GM12878 (cell line): ENCODE measurements at regions of chr1 and their contacts with region 1.

Region 1: GRCh38 chr1:50735443-50735842 is 224.6 kb downstream of the FAF1 start:
- DNase-seq: no peak
- ATAC-seq: no peak; the same call in 2 of the 3 replicates
- H3K4me3 ChIP-seq: no peak overlapping the region
- H3K27ac ChIP-seq: no peak overlapping the region
- H3K4me1 ChIP-seq: no peaks in the 10 kb centered on the region
- H3K27me3 ChIP-seq: no peaks in the 10 kb centered on the region
- CTCF ChIP-seq: peak in 2 of 3 experiments; percentile 28 to 38; a peak in 2 of 6 replicates
- EP300 ChIP-seq: no peak
- POLR2A ChIP-seq: no peak
- RAD21 ChIP-seq: 0 out of 2 replicates have a peak, but pooled peaks have one; percentile 32

Region 2: DNA sequence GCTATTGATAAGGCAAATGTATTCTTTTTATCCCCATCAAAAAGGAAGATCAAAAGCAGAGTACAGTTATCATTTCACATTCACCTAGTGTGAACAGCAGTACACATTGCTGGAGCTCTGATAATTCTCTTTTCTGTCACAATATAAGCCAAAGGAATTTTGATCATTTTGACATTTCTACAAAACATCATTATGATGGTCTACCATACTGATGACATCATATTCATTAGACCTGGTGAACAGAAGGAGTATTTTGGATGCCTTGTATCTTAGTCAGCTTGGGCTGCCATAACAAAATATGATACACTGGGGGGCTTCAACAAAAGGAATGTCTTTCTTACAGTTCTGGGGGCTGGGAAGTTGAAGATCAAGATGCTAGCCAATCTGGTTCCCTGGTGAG is 349.0 kb before region 1 on chr1:
- CTCF ChIA-PET with region 1: no interaction called
- POLR2A ChIA-PET with region 1: no interaction called
- RAD21 ChIA-PET with region 1: no interaction called
- SMC1A ChIA-PET with region 1: no interaction called
- in situ Hi-C with region 1: no loop called
- intact Hi-C with region 1: no loop called
- DNase-seq: no peak
- ATAC-seq: no peak
- H3K4me3 ChIP-seq: no peak overlapping the region
- H3K27ac ChIP-seq: no peak overlapping the region
- H3K4me1 ChIP-seq: no peaks in the 10 kb centered on the region
- H3K27me3 ChIP-seq: no peaks in the 10 kb centered on the region
- CTCF ChIP-seq: no peak
- EP300 ChIP-seq: no peak
- POLR2A ChIP-seq: no peak
- RAD21 ChIP-seq: no peak

Region 3: DNA sequence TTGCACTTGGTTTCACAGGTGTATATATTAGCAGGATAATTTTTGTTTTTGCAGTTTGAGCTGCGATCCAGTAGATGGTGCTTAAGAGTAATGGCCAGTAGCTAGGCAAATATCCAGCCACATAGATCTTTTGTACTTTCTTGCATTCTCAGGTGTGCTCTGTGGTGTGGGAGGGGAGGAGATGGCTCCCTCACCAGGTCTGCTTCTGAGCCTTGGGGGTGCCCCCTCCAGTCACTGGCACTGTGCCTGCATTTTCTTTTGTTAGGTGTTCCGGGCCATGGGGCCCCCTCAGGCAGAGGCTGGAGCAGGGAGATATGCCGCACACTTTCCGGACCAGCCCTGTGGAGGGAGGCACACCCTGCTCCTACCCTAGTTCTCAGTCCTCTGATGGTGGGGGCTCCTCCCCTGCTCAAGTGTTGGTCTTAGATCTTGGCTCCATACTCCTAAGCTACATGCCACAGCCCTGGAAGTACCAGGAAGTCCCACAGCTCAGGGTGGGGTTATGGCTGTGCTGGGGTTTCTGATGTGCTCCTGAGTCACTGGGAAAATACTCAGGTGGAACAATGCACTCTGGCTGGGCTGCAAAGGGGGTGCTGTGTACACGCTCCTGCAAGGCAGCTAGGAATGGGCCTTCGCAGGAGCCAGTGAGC is 114.6 kb before region 1 on chr1:
- CTCF ChIA-PET with region 1: interaction called, 13 read pairs
- POLR2A ChIA-PET with region 1: no interaction called
- RAD21 ChIA-PET with region 1: interaction called, 3 read pairs
- SMC1A ChIA-PET with region 1: interaction called, 3 read pairs
- in situ Hi-C with region 1: no loop called
- intact Hi-C with region 1: no loop called
- DNase-seq: no peak
- ATAC-seq: peak; percentile 46; the same call in 2 of the 3 replicates
- H3K4me3 ChIP-seq: no peak overlapping the region
- H3K27ac ChIP-seq: no peak overlapping the region
- H3K4me1 ChIP-seq: no peaks in the 10 kb centered on the region
- H3K27me3 ChIP-seq: no peaks in the 10 kb centered on the region
- CTCF ChIP-seq: peak; percentile 16 to 22 (median 19); a peak in 2 of 6 replicates
- EP300 ChIP-seq: no peak
- POLR2A ChIP-seq: no peak
- RAD21 ChIP-seq: 0 out of 2 replicates have a peak, but pooled peaks have one; percentile 2

Region 4: DNA sequence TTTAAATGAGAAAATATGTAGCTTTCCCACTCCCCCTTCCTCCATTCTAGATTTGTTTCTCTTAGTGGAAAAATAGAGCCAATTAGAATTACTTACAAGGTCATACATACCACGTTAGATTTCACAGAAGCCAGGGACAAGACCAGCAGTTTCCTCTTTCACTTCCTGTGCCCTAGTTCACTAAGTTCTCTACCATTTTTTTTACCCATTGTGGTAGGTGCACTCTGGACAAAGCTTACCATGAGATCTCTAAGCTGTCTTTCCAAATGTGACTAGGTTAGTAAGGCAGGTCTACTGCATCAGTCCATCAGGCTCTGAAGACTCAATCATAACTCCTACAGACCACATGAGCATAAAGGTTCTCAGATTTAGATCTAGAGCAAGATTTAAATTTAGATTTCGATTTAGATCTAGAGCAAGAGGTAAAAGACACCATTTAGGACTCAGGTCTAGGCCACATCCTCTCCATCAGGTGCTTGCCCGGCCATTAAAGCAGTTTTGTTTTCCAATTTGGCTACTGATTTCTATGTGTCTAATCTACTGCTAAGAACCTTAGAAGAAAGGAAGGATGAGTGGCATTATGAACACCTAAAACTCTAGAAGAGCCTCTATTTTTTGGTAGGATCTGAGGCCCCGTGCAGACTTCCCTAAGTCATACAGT is 10.7 kb before region 1 on chr1:
- CTCF ChIA-PET with region 1: interaction called, 10 read pairs
- POLR2A ChIA-PET with region 1: no interaction called
- RAD21 ChIA-PET with region 1: no interaction called
- SMC1A ChIA-PET with region 1: interaction called, 3 read pairs
- in situ Hi-C with region 1: no loop called
- intact Hi-C with region 1: no loop called
- DNase-seq: peak; percentile 62
- ATAC-seq: peak; percentile 93
- H3K4me3 ChIP-seq: no peak overlapping the region
- H3K27ac ChIP-seq: peak overlapping the region; percentile 48
- H3K4me1 ChIP-seq: peaks cover 20% of the 10 kb centered on the region
- H3K27me3 ChIP-seq: no peaks in the 10 kb centered on the region
- CTCF ChIP-seq: no peak
- EP300 ChIP-seq: no peak
- POLR2A ChIP-seq: no peak
- RAD21 ChIP-seq: no peak

Region 5: GRCh38 chr1:50917138-50918137 is 182.0 kb after region 1 on chr1:
- CTCF ChIA-PET with region 1: no interaction called
- POLR2A ChIA-PET with region 1: no interaction called
- RAD21 ChIA-PET with region 1: no interaction called
- SMC1A ChIA-PET with region 1: no interaction called
- in situ Hi-C with region 1: no loop called
- intact Hi-C with region 1: no loop called
- DNase-seq: peak; percentile 15
- ATAC-seq: peak; percentile 52
- H3K4me3 ChIP-seq: peak overlapping the region; percentile 3; the same call in 1 of the 2 replicates
- H3K27ac ChIP-seq: peak overlapping the region; percentile 49
- H3K4me1 ChIP-seq: peaks cover 3% of the 10 kb centered on the region
- H3K27me3 ChIP-seq: no peaks in the 10 kb centered on the region
- CTCF ChIP-seq: no peak
- EP300 ChIP-seq: no peak
- POLR2A ChIP-seq: no peak
- RAD21 ChIP-seq: no peak

Region 6: DNA sequence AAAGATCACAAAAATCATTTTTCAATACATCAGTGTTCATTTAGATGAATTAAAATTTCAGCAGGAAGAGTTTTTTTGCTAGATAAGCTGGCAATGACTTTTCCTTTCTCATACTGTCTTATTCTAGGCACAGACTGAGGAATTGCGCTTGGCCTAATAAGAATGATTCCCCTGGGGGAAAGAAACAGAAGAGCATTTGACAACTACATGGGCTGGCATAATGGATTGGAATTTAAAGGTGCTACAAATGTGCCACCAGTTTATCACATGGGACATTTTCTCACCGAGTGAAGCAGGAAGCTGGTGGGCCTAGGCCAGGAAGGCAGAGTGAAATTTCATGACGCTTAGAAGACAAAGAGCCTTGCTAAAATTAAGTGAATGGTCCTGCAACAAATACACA is 273.9 kb after region 1 on chr1:
- CTCF ChIA-PET with region 1: no interaction called
- POLR2A ChIA-PET with region 1: no interaction called
- RAD21 ChIA-PET with region 1: no interaction called
- SMC1A ChIA-PET with region 1: no interaction called
- in situ Hi-C with region 1: no loop called
- intact Hi-C with region 1: no loop called
- DNase-seq: no peak
- ATAC-seq: no peak
- H3K4me3 ChIP-seq: no peak overlapping the region
- H3K27ac ChIP-seq: no peak overlapping the region
- H3K4me1 ChIP-seq: no peaks in the 10 kb centered on the region
- H3K27me3 ChIP-seq: no peaks in the 10 kb centered on the region
- CTCF ChIP-seq: no peak
- EP300 ChIP-seq: no peak
- POLR2A ChIP-seq: no peak
- RAD21 ChIP-seq: no peak